Calu3 (cell line): ENCODE measurements at regions of chr22 and their contacts with region 1.

Region 1: GRCh38 chr22:37032546-37033460 is 13.3 kb downstream of the MPST start:
- DNase-seq: peak; percentile 91
- H3K4me3 Mint-ChIP-seq: peak overlapping the region; percentile 63
- H3K27ac Mint-ChIP-seq: peak overlapping the region; percentile 100
- H3K4me1 Mint-ChIP-seq: peaks cover 52% of the 10 kb centered on the region
- H3K27me3 Mint-ChIP-seq: no peaks in the 10 kb centered on the region
- CTCF ChIP-seq: no peak

Region 2: DNA sequence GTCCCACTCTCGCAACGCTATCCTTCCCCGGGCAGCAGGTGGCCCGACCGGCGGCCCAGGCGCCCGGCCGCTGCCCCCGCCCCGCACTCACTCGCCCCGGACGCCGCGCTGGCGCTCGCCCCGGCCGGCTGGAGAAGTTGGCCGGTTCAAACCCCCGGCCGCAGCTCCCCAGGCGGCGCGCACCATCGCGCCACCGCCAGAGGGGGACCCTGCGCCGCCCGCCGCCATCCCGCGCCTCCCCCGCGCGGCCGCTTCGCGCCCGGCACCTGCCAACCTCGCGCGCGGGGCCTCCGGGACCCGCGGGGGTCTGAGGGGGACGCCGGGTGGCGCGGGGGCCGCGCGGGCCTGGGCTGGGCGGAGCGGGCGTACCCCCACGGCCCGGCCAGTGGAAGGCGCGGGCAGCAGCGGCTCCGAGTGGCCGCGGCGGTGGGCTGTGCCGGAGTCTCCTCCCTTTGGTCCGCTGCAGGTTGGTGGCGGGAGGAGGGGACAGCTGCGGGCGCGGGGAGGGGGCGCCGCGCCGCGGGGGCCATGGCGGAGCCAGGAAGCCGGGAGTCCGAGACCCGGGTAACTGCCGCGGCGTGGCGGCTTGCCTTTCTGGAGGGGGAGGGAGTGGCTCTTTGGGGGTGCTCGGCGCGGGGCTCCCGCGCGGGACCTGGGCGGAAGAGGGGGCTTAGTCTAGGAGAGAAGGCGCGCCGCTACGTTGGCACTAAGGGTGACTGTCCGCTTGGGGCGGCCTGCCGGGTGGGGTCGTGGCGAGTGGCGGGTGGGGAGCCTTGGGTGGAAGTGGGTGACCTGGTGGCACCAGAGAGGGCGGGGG is 13.3 kb before region 1 on chr22 and contains the starts of genes MPST and TST:
- CTCF ChIA-PET with region 1: interaction called, 12 read pairs
- intact Hi-C with region 1: no loop called
- DNase-seq: peak; percentile 75
- H3K4me3 Mint-ChIP-seq: peak within 1 kb of the TSS; percentile 95
- H3K27ac Mint-ChIP-seq: peak within 1 kb of the TSS; percentile 74
- H3K4me1 Mint-ChIP-seq: peaks cover 43% of the 10 kb centered on the region
- H3K27me3 Mint-ChIP-seq: no peaks in the 10 kb centered on the region
- CTCF ChIP-seq: peak; percentile 30
- total RNA-seq, gene MPST: 60.8 and 73.0 TPM in 2 replicates
- total RNA-seq, gene TST: 52.2 and 64.7 TPM in 2 replicates

Region 3: GRCh38 chr22:37043828-37044538 is 11.2 kb after region 1 on chr22:
- CTCF ChIA-PET with region 1: interaction called, 46 read pairs
- intact Hi-C with region 1: no loop called
- DNase-seq: peak; percentile 90
- H3K4me3 Mint-ChIP-seq: peak overlapping the region; percentile 39
- H3K27ac Mint-ChIP-seq: peak overlapping the region; percentile 74
- H3K4me1 Mint-ChIP-seq: peaks cover 44% of the 10 kb centered on the region
- H3K27me3 Mint-ChIP-seq: no peaks in the 10 kb centered on the region
- CTCF ChIP-seq: peak; percentile 87